ENCODE measurements at regions of chr4 and their contacts with region 1.

Region 1: DNA sequence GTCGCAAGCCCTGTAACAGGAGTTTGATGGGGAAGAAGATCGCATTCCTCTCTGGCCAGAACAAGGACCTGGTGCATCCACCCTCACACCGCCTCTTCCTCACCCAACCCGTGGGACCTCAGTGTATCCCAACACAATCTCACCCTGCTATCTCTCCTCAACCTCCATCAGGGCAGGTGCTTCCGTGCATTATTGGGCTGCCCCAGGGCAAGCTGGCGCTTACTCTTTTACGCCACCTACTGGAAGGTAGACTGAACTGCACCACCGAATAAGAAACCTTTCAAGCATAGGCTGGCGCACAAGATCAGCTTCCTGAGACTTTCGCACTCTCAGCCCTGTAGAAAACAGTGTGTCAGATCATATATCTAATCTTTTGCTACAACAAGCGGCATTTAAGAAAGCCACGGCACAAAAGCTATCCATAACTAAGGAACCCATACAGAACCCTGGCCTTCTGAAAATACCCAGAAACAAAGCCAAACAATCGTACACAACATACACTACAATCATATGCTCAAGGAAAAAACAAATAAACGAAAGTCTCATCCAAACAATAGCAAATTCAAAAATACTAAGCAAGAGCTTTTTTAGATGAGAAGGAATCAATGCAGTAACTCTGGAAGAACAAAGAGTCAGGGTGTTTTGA is 209.3 kb downstream of the UGT8 start:
- DNase-seq: peak; percentile 11 to 44 (median 26)
- H3K4me3 ChIP-seq: no peak overlapping the region
- H3K27ac ChIP-seq: no peak overlapping the region
- H3K4me1 ChIP-seq: no peaks in the 10 kb centered on the region
- H3K27me3 ChIP-seq: peaks cover 0 to 3% (median 0%) of the 10 kb centered on the region in 5 experiments

Region 2: DNA sequence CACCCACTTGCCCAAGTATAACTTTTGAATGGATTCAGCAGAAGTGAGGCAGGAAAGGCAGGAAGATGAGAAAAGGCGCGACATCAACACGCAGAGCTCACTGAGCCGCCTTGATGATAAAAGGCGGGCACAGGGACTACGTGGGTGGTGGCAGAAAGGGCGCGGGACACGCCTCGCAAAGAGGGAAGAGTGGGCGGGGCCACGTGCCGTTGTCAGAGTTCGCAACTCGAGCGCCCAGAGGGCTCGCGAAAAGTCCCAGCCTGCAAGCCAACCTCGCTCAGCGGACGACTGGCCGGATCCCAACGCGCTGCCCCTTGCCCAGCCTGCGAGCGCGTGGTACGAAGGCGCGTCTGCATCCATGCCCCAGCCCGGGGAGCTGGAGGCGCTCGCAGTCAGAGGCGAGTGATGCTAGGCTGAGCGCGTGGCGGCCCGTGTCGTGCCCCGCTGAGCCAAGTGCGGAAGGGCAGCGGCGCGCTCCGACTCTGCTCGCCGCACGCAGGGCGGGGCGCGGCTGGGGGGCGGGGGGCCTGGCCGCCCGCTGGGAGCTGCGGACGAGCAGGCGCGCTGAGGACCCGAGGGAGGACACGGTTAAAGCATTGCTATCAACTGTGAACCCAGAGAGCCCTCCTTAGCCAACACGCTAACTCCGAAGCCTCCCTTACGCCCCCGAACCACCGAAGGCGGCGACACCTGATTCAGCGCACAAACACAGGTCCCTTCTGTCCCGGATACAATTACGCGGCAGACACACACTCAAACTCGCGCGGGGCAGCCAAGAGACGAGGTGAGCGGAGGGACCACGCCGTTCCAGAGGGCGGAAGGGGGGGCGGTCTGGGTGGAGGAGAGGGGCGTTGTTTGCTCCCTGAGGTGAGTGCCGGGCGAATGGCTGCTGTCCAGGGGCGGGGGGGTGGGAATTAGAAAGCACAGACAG is 209.4 kb before region 1 on chr4 and contains the start of gene UGT8:
- CTCF ChIA-PET with region 1: no interaction called
- POLR2A ChIA-PET with region 1: no interaction called
- DNase-seq: peak; percentile 25 to 68 (median 47)
- H3K4me3 ChIP-seq: peak within 1 kb of the TSS; percentile 38 to 74 (median 54)
- H3K27ac ChIP-seq: no peak within 1 kb of the TSS
- H3K4me1 ChIP-seq: peaks cover 0 to 21% (median 18%) of the 10 kb centered on the region in 4 experiments
- H3K27me3 ChIP-seq: peaks cover 16 to 72% (median 19%) of the 10 kb centered on the region in 5 experiments

Region 3: GRCh38 chr4:114791976-114792375 is 15.9 kb before region 1 on chr4:
- CTCF ChIA-PET with region 1: interaction called, 15 read pairs
- POLR2A ChIA-PET with region 1: no interaction called
- DNase-seq: no peak
- H3K4me3 ChIP-seq: no peak overlapping the region
- H3K27ac ChIP-seq: no peak overlapping the region
- H3K4me1 ChIP-seq: no peaks in the 10 kb centered on the region
- H3K27me3 ChIP-seq: peaks cover 0 to 4% (median 0%) of the 10 kb centered on the region in 5 experiments

Measured in common myeloid progenitor, CD34-positive (primary cell).